ENCODE measurements at regions of chr7 and their contacts with region 1.

Region 1: DNA sequence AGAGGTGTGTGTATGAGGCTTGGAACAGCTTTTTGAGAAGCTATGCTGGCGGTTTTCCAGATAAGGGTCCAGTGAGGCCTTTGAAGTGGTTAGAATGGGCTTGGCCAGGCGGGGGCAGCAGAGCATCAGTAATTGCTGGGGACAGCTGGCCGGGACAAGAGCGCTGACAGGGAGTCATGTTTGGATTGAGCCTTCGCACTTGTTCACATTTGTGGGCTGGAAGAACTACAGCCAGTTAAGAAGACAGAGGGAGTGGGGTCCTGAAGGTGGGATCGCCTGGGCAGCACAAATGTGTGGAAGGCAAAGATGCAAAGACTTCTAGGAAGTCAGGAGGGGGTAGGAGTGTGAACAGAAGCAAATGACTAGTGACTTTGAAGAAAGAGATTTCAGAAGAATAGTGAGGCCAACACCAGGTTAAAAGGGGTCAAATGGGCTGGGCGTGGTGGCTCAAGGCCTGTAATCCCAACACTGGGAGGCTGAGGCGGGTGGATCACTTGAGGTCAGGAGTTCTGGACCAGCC is 12.7 kb upstream of the SDHAF3 start:
- DNase-seq: peak; percentile 79
- H3K4me3 ChIP-seq: no peak overlapping the region
- H3K27ac ChIP-seq: no peak overlapping the region
- H3K4me1 ChIP-seq: no peaks in the 10 kb centered on the region
- H3K27me3 ChIP-seq: peaks cover 0 to 3% of the 10 kb centered on the region in 2 experiments
- CTCF ChIP-seq: peak; percentile 69 to 78
- POLR2A ChIP-seq: no peak

Region 2: GRCh38 chr7:97094284-97094930 is 10.4 kb before region 1 on chr7:
- CTCF ChIA-PET with region 1: interaction called, 10 read pairs
- POLR2A ChIA-PET with region 1: no interaction called
- dilution Hi-C with region 1: no loop called
- intact Hi-C with region 1: no loop called
- DNase-seq: no peak
- H3K4me3 ChIP-seq: no peak overlapping the region
- H3K27ac ChIP-seq: no peak overlapping the region
- H3K4me1 ChIP-seq: no peaks in the 10 kb centered on the region
- H3K27me3 ChIP-seq: peaks cover 1 to 2% of the 10 kb centered on the region in 2 experiments
- CTCF ChIP-seq: no peak
- POLR2A ChIP-seq: no peak

Region 3: GRCh38 chr7:97145068-97145467 is 40.3 kb after region 1 on chr7:
- CTCF ChIA-PET with region 1: interaction called, 8 read pairs
- POLR2A ChIA-PET with region 1: no interaction called
- dilution Hi-C with region 1: no loop called
- intact Hi-C with region 1: loop called (anchors 1 kb)
- DNase-seq: peak; percentile 58
- H3K4me3 ChIP-seq: no peak overlapping the region
- H3K27ac ChIP-seq: no peak overlapping the region
- H3K4me1 ChIP-seq: no peaks in the 10 kb centered on the region
- H3K27me3 ChIP-seq: no peaks in the 10 kb centered on the region
- CTCF ChIP-seq: peak; percentile 14 to 16
- POLR2A ChIP-seq: no peak

Region 4: DNA sequence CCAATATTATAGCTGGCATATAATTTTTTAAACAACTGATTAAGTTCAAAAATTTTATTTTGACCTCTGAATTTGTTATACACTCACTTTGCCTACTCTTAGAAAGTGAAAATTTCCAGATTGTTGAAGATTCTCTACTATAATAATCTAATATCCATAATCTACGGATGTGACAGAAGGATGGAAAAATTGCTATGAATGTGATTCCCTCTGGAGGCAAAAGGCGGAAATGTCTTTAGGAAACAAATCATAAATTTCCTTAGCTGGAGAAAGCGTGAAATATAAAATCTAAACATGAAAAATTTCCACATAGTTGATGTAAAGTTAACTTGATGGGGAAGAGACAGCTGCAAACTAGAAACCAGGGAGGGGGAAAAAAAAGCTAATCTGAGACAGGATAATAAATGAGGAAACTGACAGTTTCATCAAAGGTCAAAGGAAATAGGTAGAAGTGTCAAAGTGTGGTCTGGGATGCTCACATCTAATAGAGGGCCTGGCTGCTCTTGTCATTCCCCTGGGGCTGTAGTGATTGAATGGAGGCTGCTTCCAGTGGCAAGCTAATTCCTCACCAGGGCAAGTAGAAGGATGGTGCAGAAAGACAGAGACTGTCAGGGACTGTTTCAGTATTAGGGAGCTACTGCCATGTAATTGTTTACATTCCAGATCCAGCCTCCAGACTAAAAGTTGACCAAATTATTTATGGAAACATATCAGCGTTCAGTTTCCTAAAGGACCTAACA is 277.2 kb after region 1 on chr7:
- CTCF ChIA-PET with region 1: no interaction called
- POLR2A ChIA-PET with region 1: no interaction called
- dilution Hi-C with region 1: no loop called
- intact Hi-C with region 1: no loop called
- DNase-seq: no peak
- H3K4me3 ChIP-seq: no peak overlapping the region
- H3K27ac ChIP-seq: no peak overlapping the region
- H3K4me1 ChIP-seq: no peaks in the 10 kb centered on the region
- H3K27me3 ChIP-seq: no peaks in the 10 kb centered on the region
- CTCF ChIP-seq: no peak
- POLR2A ChIP-seq: no peak

Region 5: GRCh38 chr7:97565665-97566064 is 460.9 kb after region 1 on chr7:
- CTCF ChIA-PET with region 1: no interaction called
- POLR2A ChIA-PET with region 1: no interaction called
- dilution Hi-C with region 1: no loop called
- intact Hi-C with region 1: loop called (anchors 5 kb)
- DNase-seq: no peak
- H3K4me3 ChIP-seq: no peak overlapping the region
- H3K27ac ChIP-seq: no peak overlapping the region
- H3K4me1 ChIP-seq: no peaks in the 10 kb centered on the region
- H3K27me3 ChIP-seq: no peaks in the 10 kb centered on the region
- CTCF ChIP-seq: no peak
- POLR2A ChIP-seq: no peak

Region 6: DNA sequence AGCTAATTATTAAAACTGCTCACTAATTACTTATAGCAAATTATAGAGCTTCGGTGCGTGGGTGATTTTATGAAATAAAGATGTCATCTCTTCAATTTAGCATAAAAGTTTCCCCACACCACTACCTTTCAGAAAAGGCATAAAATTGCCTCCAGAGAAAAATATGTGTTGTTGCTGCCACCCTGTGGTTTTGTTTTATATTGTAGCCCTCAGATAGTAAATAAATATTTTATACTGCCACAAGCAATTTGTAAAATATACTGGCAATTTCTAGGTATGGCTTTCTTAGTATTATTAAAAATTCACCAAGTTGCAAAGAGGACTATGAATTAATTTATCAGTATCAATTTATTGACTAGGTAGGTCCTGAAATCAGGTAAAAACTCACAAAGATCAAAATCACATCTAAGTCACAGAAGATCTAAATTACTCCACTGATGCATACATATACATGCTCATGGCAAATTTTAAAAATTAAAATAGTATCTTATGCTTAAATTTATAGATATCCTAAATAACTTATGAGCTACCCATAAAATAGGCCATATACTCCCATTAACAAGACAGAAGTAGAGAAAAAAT is 740.9 kb after region 1 on chr7:
- CTCF ChIA-PET with region 1: interaction called, 33 read pairs
- POLR2A ChIA-PET with region 1: no interaction called
- dilution Hi-C with region 1: no loop called
- intact Hi-C with region 1: loop called (anchors 1 kb)
- DNase-seq: peak; percentile 36
- H3K4me3 ChIP-seq: no peak overlapping the region
- H3K27ac ChIP-seq: no peak overlapping the region
- H3K4me1 ChIP-seq: no peaks in the 10 kb centered on the region
- H3K27me3 ChIP-seq: no peaks in the 10 kb centered on the region
- CTCF ChIP-seq: peak in 1 of 2 donors; percentile 20
- POLR2A ChIP-seq: no peak